ENCODE measurements at regions of chr2 and their contacts with region 1.

Region 1: GRCh38 chr2:62577994-62578781 is 72.2 kb upstream of the TMEM17 start:
- DNase-seq: peak; percentile 98
- H3K4me3 ChIP-seq: peak overlapping the region in 1 of 3 experiments; percentile 8
- H3K27ac ChIP-seq: peak overlapping the region; percentile 100
- H3K4me1 ChIP-seq: peaks cover 33% of the 10 kb centered on the region
- H3K27me3 ChIP-seq: no peaks in the 10 kb centered on the region
- CTCF ChIP-seq: no peak

Region 2: DNA sequence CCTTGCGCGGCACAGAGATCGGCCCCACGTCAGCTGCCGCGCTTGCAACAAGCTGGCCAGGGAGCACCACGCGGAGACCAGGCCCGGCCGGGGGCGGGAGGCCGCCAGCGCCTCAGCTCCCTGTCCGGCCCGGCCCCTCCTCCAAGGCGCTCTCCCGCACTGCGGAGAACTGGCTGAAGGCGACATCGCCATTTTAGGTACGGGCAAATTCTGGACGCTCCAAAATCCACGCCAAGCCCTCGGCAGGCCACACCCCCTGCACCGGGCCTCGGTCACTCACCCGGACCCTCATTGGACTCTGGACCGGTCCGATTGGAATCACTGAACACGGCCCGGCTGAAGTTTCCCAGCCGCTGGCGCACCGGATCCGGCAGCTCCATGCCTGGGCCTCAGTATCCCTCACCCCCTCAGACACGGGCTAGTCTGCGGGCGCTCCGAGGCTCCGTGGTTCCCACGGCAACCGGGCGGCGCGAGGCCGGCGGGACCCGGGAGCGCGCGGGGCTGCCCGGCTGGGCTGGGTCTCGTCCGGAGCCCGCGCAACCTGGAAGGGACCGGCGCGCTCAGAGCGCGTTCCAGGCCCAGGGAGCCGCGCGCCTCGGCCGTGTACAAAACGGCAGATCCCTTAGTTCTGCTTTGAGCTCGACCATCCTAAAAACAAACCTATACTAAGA is 72.3 kb before region 1 on chr2 and contains the start of gene TMEM17:
- CTCF ChIA-PET with region 1: no interaction called
- dilution Hi-C with region 1: no loop called
- in situ Hi-C with region 1: no loop called
- intact Hi-C with region 1: loop called (anchors 2 kb)
- DNase-seq: peak; percentile 86
- H3K4me3 ChIP-seq: peak within 1 kb of the TSS; percentile 62 to 83 (median 63)
- H3K27ac ChIP-seq: peak within 1 kb of the TSS; percentile 90
- H3K4me1 ChIP-seq: peaks cover 20% of the 10 kb centered on the region
- H3K27me3 ChIP-seq: no peaks in the 10 kb centered on the region
- CTCF ChIP-seq: no peak
- total RNA-seq, gene TMEM17: 3.0 to 3.9 TPM

Region 3: DNA sequence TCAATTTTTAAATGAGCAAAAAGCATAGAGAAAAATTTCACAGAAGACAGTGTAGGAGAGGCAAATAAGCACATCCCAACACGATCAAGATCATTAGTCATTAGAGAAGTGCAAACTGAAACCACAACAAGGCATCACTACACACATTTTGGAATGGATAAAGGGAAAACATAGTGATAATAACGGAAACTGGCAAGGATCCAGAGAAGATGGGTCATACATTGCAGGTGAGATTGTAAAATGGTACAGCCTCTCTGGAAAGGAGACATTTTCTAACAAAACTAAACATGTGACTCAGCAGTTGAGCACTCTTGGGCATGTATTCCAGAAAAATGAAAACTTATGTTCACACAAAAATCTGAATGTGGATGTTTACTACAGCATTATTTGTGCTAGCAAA is 26.1 kb after region 1 on chr2:
- CTCF ChIA-PET with region 1: no interaction called
- dilution Hi-C with region 1: no loop called
- in situ Hi-C with region 1: no loop called
- intact Hi-C with region 1: loop called (anchors 1 kb)
- DNase-seq: peak; percentile 90
- H3K4me3 ChIP-seq: no peak overlapping the region
- H3K27ac ChIP-seq: peak overlapping the region; percentile 44
- H3K4me1 ChIP-seq: peaks cover 16% of the 10 kb centered on the region
- H3K27me3 ChIP-seq: no peaks in the 10 kb centered on the region
- CTCF ChIP-seq: no peak

Region 4: GRCh38 chr2:62660582-62661262 is 82.5 kb after region 1 on chr2:
- CTCF ChIA-PET with region 1: no interaction called
- dilution Hi-C with region 1: no loop called
- in situ Hi-C with region 1: no loop called
- intact Hi-C with region 1: loop called (anchors 5 kb)
- DNase-seq: peak; percentile 86
- H3K4me3 ChIP-seq: peak overlapping the region in 1 of 3 experiments; percentile 3
- H3K27ac ChIP-seq: peak overlapping the region; percentile 83
- H3K4me1 ChIP-seq: peaks cover 49% of the 10 kb centered on the region
- H3K27me3 ChIP-seq: no peaks in the 10 kb centered on the region
- CTCF ChIP-seq: no peak

Region 5: GRCh38 chr2:62705007-62705829 is 127.0 kb after region 1 on chr2 and contains the start of gene EHBP1:
- CTCF ChIA-PET with region 1: no interaction called
- dilution Hi-C with region 1: no loop called
- in situ Hi-C with region 1: no loop called
- intact Hi-C with region 1: loop called (anchors 1 kb)
- DNase-seq: peak; percentile 100
- H3K4me3 ChIP-seq: peak within 1 kb of the TSS; percentile 79 to 91 (median 90)
- H3K27ac ChIP-seq: peak within 1 kb of the TSS; percentile 91
- H3K4me1 ChIP-seq: peaks cover 19% of the 10 kb centered on the region
- H3K27me3 ChIP-seq: no peaks in the 10 kb centered on the region
- CTCF ChIP-seq: no peak
- total RNA-seq, gene EHBP1: 46.0 to 101 TPM

Region 6: DNA sequence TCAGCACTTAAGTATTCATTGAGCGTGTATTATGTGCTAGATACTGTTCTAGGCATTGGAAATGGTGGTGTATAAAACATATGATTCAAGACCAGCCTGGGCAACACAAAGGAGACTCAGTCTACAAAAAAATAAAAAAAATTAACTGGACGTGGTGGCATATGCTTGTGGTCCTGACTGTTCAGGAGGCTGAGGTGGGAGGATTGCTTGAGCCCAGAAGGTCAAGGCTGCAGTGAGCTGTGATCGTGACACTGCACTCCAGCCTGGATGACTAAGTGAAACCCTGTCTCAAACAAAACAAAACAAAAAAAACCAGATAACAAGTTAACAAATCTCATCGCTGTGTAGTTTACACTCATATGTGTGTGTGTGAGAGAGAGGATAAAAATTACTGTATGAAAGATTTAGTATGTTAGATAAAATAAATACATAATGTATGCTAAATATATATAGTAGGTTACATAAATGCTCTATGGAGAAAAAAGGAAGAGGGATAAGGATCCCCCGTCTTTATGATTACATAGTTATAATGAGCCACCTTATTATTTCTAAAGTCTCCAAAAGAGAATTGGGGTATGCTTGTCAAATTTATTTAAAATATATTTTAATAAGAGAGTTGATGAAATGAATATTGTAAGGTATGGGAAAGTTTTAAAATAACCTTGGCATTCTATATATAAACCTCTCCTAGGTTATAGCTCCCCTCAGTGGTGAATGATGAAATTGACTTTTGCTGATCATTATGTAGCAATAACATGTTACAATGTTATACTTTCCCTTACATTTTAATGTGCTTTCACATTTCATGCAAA is 196.6 kb after region 1 on chr2:
- CTCF ChIA-PET with region 1: no interaction called
- dilution Hi-C with region 1: no loop called
- in situ Hi-C with region 1: no loop called
- intact Hi-C with region 1: loop called (anchors 1 kb)
- DNase-seq: peak; percentile 46
- H3K4me3 ChIP-seq: no peak overlapping the region
- H3K27ac ChIP-seq: peak overlapping the region; percentile 40
- H3K4me1 ChIP-seq: no peaks in the 10 kb centered on the region
- H3K27me3 ChIP-seq: no peaks in the 10 kb centered on the region
- CTCF ChIP-seq: peak; percentile 71